Activated T-helper 1 cell treated with anti-CD3 and anti-CD28 coated beads, Interleukin-12 subunit alpha, Interleukin-12 subunit beta, Interleukin-2, Interleukin-4 antibody, amounts not matched to agents 30 ng/mL and 10 ng/mL and 1 ng/mL, durations not matched to agents 14 hours and 24 hours and 36 hours (primary cell): ENCODE measurements at regions of chr1 and their contacts with region 1.

Region 1: DNA sequence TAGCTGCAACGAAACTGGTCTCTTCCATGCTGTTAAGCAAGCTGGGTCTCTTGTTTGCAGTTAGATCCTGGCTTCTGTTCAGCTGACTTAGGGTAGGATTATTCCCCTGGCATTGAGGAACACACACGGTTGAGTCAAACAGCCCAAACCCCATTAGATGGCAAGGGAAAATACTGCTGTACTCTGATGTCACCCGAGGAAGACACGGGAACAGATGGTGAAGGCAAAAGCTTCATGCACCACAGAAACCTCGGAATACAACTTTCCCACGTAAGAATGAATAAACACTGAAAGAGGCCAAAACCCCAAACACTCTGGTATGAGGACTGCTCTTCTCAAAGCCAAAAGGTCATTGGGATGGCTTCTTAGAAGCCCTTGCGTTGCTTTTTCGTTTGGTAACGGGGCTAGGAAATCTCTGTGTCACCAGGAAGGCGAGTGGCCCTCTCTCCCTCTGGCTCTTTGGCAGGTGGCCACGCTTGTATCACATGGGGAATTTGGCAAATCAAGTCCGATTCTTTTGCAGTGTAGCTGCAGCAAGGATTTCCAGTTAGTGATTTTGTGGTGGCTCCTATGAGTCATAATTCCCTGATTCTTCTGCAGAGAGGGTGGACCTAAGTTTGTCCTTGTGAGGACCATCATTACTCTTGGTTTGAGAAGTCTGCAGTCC is 16.7 kb upstream of the LYST start:
- DNase-seq: no peak
- H3K4me3 Mint-ChIP-seq: peak overlapping the region; percentile 81
- H3K27ac Mint-ChIP-seq: peak overlapping the region; percentile 89
- H3K4me1 Mint-ChIP-seq: peaks cover 78% of the 10 kb centered on the region
- H3K27me3 Mint-ChIP-seq: no peaks in the 10 kb centered on the region

Region 2: GRCh38 chr1:235642011-235642942 is 241.1 kb before region 1 on chr1:
- intact Hi-C with region 1: loop called (anchors 1 kb)
- DNase-seq: peak; percentile 76
- H3K4me3 Mint-ChIP-seq: peak overlapping the region; percentile 67
- H3K27ac Mint-ChIP-seq: peak overlapping the region; percentile 92
- H3K4me1 Mint-ChIP-seq: peaks cover 71% of the 10 kb centered on the region
- H3K27me3 Mint-ChIP-seq: peaks cover 17% of the 10 kb centered on the region

Region 3: DNA sequence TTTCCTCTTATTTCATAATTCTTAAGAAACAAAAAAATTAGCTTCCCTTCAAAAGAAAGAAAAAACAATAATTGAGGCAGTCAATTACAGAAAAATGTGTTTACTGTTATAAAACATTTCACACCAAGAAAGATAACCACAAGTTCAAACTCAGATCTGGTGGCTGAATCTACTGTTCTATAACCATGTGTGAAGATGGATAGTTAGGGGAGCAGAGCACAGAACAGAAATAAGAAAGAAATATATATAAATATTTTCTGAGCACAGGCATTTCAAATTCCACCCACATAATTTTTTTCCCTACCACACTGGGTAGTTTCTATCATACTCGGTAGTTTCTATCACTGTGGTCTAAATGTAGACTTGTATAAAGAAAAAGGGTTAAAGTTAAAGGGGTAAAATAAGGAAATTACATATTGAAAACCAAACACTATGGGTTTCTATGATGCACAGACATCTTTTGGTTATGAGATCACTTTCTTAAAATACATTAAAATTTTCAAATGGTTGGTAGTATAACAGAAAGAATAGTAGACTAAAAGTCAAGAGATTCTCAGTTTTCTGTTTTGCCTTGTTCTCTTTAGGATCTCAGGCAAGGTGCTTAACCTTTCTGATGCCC is 27.5 kb before region 1 on chr1:
- intact Hi-C with region 1: loop called (anchors 1 kb)
- DNase-seq: no peak
- H3K4me3 Mint-ChIP-seq: no peak overlapping the region
- H3K27ac Mint-ChIP-seq: peak overlapping the region; percentile 37
- H3K4me1 Mint-ChIP-seq: peaks cover 41% of the 10 kb centered on the region
- H3K27me3 Mint-ChIP-seq: no peaks in the 10 kb centered on the region

Region 4: DNA sequence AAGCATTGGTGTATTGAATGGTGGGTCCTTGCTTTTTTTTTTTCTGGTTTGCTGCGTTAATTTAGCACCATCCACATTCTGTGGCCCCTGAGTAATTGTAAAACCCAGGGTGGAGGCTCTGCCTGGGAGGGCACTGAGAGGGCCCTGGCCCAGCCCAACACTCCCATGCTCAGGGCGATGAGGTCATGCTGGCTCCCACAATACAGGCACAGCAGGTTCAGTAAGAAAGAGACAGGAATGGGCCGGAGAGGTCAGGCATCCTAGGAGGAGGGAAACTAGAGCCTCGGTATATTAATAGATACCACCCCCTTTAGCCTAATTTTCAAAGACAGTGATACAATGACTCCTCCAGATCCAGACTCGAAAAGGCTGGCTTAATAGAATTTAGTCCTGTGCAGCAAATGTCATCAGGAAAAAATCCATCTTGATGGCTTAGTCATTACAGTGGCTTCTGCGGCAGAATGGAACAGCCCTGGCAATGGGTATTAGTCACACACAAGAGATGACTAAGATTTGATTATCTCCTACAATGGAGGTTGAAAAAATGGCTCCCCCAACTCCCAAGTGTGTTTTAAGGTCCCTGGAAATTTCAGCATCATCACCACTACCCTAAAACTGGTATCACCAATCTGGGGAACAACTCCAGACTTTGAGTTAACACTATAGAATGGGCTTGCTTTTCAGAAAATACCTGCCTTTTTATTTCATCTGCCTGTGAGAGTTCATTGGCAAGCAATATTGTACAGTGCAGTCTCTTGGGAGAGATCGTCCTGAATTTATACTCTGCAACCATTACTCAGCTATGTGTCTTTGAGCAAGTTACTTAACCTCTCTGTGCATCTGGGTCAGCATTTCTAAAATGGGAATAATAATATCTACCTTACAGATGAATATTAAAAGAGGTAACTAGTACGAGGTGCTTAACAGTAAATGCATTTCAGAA is 27.2 kb after region 1 on chr1:
- intact Hi-C with region 1: loop called (anchors 1 kb)
- DNase-seq: no peak
- H3K4me3 Mint-ChIP-seq: peak overlapping the region; percentile 41
- H3K27ac Mint-ChIP-seq: peak overlapping the region; percentile 60
- H3K4me1 Mint-ChIP-seq: peaks cover 37% of the 10 kb centered on the region
- H3K27me3 Mint-ChIP-seq: no peaks in the 10 kb centered on the region

Region 5: DNA sequence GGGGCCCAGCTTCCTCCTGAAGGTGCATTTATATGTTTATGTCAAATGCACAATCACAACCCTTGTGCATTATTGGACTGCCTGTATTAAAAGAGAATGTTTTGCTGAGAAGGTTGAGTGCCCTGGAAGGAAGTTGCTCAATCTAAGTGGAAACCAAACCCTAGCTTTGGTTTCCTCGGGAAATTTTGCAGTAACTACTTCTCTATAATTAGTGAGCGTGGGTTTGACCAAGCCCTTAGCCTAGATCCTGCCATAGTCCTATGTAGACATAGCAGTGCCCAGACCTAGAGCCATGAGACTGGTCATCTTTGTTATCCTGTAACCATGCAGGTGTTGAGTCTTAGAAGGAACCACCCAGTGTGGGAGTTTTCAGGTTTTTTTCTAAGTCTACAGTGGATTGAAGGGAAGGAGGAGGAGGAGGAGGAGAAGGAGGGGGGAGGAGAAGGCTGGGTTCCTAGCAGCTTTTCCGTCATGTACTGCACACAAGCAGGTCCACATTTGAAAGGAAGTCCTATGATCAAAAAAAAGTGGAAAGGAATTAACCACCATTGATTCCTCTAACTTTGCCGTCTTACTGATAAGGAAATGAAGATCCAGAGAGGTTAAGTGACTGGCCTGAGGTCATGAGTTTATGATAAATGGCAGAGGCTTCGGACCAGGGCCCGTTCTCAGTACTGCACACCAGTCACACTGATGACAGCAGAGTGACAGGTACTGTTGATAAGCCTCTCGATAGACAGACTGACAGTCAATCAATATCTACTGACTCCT is 55.5 kb after region 1 on chr1:
- intact Hi-C with region 1: loop called (anchors 1 kb)
- DNase-seq: peak; percentile 10
- H3K4me3 Mint-ChIP-seq: peak overlapping the region; percentile 42
- H3K27ac Mint-ChIP-seq: peak overlapping the region; percentile 84
- H3K4me1 Mint-ChIP-seq: peaks cover 52% of the 10 kb centered on the region
- H3K27me3 Mint-ChIP-seq: peaks cover 4% of the 10 kb centered on the region

Region 6: DNA sequence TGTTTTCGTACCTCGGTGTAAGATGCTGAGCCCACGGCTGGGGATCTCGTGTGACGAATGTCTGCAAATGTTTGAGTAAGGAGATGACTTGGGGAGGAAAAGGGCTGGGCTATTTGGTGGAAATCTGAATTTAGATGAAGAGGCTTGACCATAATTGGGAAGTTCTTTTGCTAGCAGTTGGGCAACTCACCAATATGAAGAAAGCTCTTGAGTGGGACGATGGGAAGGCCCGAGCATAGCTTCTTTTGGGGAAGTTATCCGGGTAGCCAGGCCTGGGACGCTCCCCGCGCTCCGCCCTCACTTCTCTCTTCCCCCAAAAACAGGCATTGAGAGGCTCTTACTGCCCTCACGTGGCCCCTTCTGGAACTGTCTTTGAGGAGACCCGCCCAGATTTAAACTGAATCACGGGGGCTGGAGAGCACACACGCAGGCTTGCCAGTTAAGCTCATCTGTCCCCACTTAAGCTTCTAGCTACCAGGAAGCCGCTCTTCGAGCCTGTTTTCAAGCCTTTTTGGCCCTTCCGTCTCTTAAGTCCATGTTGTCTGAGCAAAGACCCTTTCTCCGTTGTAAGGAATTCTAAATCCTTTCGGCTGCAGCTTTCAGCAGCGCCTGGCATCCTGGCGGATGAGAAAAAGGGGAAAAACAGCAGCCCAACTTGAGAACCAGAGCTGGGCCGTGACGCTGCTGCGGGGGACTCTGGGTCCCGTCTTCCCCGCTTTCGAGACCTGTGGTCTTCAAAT is 88.3 kb after region 1 on chr1:
- intact Hi-C with region 1: loop called (anchors 1 kb)
- DNase-seq: peak; percentile 80
- H3K4me3 Mint-ChIP-seq: peak overlapping the region; percentile 79
- H3K27ac Mint-ChIP-seq: peak overlapping the region; percentile 84
- H3K4me1 Mint-ChIP-seq: peaks cover 17% of the 10 kb centered on the region
- H3K27me3 Mint-ChIP-seq: peaks cover 11% of the 10 kb centered on the region

Region 7: GRCh38 chr1:236281654-236282424 is 398.4 kb after region 1 on chr1 and contains the start of gene ERO1B:
- intact Hi-C with region 1: loop called (anchors 10 kb)
- DNase-seq: peak; percentile 98
- H3K4me3 Mint-ChIP-seq: peak within 1 kb of the TSS; percentile 90
- H3K27ac Mint-ChIP-seq: peak within 1 kb of the TSS; percentile 80
- H3K4me1 Mint-ChIP-seq: peaks cover 45% of the 10 kb centered on the region
- H3K27me3 Mint-ChIP-seq: peaks cover 12% of the 10 kb centered on the region
- total RNA-seq, gene ERO1B: 2.1 and 2.4 TPM in 2 replicates